B cell (primary cell): ENCODE measurements at regions of chr10 and their contacts with region 1.

Region 1: GRCh38 chr10:75019370-75019769 is 92.1 kb upstream of the SAMD8 start:
- DNase-seq: peak; percentile 55
- ATAC-seq: no peak
- H3K4me3 ChIP-seq: no peak overlapping the region
- H3K4me3 Mint-ChIP-seq: no peak overlapping the region
- H3K27ac ChIP-seq: no peak overlapping the region
- H3K27ac Mint-ChIP-seq: no peak overlapping the region
- H3K4me1 ChIP-seq: peaks cover 7 to 8% of the 10 kb centered on the region in 2 donors
- H3K4me1 Mint-ChIP-seq: peaks cover 22% of the 10 kb centered on the region
- H3K27me3 ChIP-seq: no peaks in the 10 kb centered on the region
- H3K27me3 Mint-ChIP-seq: no peaks in the 10 kb centered on the region
- CTCF ChIP-seq: peak; percentile 53

Region 2: DNA sequence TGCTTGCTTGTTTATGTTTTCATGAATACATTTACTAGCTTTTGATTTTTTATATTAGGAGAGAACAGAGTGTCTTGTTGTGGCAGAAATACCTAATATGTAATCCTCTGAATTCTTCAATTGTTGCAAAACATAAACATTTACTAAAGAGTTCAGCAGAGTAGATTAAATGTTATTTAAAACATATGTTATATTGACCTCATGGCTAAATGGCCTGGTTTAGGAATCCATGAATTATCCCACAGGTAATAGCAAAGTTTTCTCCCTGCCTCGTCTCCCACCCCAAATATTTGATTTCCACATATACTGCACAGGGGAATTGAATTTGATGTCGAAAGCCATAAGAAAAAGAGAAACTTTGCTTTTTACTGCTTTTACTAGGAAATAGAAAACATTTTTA is 756.5 kb before region 1 on chr10:
- CTCF ChIA-PET with region 1: interaction called, 13 read pairs
- POLR2A ChIA-PET with region 1: interaction called, 3 read pairs
- intact Hi-C with region 1: loop called (anchors 1 kb)
- DNase-seq: no peak
- ATAC-seq: no peak
- H3K4me3 ChIP-seq: no peak overlapping the region
- H3K4me3 Mint-ChIP-seq: no peak overlapping the region
- H3K27ac ChIP-seq: no peak overlapping the region
- H3K27ac Mint-ChIP-seq: peak overlapping the region; percentile 4
- H3K4me1 ChIP-seq: peaks cover 0 to 9% of the 10 kb centered on the region in 2 donors
- H3K4me1 Mint-ChIP-seq: peaks cover 20% of the 10 kb centered on the region
- H3K27me3 ChIP-seq: no peaks in the 10 kb centered on the region
- H3K27me3 Mint-ChIP-seq: no peaks in the 10 kb centered on the region
- CTCF ChIP-seq: no peak

Region 3: DNA sequence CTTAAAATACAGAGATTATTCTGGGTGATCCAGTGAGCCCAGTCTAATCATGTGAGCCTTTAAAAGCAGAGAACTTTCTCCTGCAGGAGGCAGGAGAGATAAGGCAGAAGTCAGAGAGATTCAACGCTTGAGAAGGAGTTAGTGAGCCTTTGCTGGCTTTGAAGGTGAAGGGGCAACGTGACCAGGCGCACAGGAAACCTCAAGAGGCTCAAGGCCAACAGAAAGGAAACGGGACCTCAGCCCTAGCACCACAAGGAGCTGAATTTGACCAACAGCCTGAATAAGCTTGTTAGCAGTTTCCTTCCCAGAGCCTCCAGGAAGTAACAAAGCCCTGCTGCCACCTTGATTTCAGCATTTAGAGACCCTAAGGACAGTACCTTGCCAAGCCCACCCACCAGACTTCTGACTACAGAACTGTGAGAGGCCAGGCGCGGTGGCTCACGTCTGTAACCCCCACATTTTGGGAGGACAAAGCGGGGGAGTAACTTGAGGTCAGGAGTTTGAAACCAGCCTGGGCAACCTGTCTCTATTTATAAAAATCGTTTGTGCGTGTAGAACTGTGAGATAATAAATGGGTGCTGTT is 280.3 kb before region 1 on chr10:
- CTCF ChIA-PET with region 1: interaction called, 49 read pairs
- POLR2A ChIA-PET with region 1: no interaction called
- intact Hi-C with region 1: loop called (anchors 1 kb)
- DNase-seq: peak; percentile 64
- ATAC-seq: peak; percentile 69
- H3K4me3 ChIP-seq: peak overlapping the region in 3 of 5 experiments; percentile 10 to 33 (median 25)
- H3K4me3 Mint-ChIP-seq: peak overlapping the region; percentile 66
- H3K27ac ChIP-seq: peak overlapping the region; percentile 15 to 37
- H3K27ac Mint-ChIP-seq: peak overlapping the region; percentile 75
- H3K4me1 ChIP-seq: peaks cover 21 to 23% of the 10 kb centered on the region in 2 donors
- H3K4me1 Mint-ChIP-seq: peaks cover 25% of the 10 kb centered on the region
- H3K27me3 ChIP-seq: no peaks in the 10 kb centered on the region
- H3K27me3 Mint-ChIP-seq: no peaks in the 10 kb centered on the region
- CTCF ChIP-seq: peak; percentile 54

Region 4: GRCh38 chr10:74799721-74800221 is 219.6 kb before region 1 on chr10:
- CTCF ChIA-PET with region 1: no interaction called
- POLR2A ChIA-PET with region 1: no interaction called
- intact Hi-C with region 1: no loop called
- DNase-seq: no peak
- ATAC-seq: no peak
- H3K4me3 ChIP-seq: no peak overlapping the region
- H3K4me3 Mint-ChIP-seq: no peak overlapping the region
- H3K27ac ChIP-seq: no peak overlapping the region
- H3K27ac Mint-ChIP-seq: no peak overlapping the region
- H3K4me1 ChIP-seq: peaks cover 22 to 24% of the 10 kb centered on the region in 2 donors
- H3K4me1 Mint-ChIP-seq: peaks cover 22% of the 10 kb centered on the region
- H3K27me3 ChIP-seq: peaks cover 0 to 7% (median 4%) of the 10 kb centered on the region in 4 experiments
- H3K27me3 Mint-ChIP-seq: peaks cover 10% of the 10 kb centered on the region
- CTCF ChIP-seq: no peak

Region 5: DNA sequence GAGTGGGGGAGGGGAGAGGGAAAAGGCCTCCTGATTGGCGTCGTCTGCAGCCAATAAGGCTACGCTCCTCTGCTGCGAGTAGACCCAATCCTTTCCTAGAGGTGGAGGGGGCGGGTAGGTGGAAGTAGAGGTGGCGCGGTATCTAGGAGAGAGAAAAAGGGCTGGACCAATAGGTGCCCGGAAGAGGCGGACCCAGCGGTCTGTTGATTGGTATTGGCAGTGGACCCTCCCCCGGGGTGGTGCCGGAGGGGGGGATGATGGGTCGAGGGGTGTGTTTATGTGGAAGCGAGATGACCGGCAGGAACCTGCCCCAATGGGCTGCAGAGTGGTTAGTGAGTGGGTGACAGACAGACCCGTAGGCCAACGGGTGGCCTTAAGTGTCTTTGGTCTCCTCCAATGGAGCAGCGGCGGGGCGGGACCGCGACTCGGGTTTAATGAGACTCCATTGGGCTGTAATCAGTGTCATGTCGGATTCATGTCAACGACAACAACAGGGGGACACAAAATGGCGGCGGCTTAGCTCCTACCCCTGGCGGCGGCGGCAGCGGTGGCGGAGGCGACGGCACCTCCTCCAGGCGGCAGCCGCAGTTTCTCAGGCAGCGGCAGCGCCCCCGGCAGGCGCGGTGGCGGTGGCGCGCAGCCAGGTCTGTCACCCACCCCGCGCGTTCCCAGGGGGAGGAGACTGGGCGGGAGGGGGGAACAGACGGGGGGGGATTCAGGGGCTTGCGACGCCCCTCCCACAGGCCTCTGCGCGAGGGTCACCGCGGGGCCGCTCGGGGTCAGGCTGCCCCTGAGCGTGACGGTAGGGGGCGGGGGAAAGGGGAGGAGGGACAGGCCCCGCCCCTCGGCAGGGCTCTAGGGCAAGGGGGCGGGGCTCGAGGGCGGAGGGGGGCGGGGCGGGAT is 193.0 kb before region 1 on chr10 and contains the start of gene KAT6B:
- CTCF ChIA-PET with region 1: interaction called, 4 read pairs
- POLR2A ChIA-PET with region 1: interaction called, 4 read pairs
- intact Hi-C with region 1: loop called (anchors 10 kb)
- DNase-seq: peak; percentile 100
- ATAC-seq: peak; percentile 75
- H3K4me3 ChIP-seq: peak within 1 kb of the TSS; percentile 81 to 99 (median 90)
- H3K4me3 Mint-ChIP-seq: peak within 1 kb of the TSS; percentile 93
- H3K27ac ChIP-seq: peak within 1 kb of the TSS; percentile 91 to 99
- H3K27ac Mint-ChIP-seq: peak within 1 kb of the TSS; percentile 97
- H3K4me1 ChIP-seq: peaks cover 30 to 38% of the 10 kb centered on the region in 2 donors
- H3K4me1 Mint-ChIP-seq: peaks cover 42% of the 10 kb centered on the region
- H3K27me3 ChIP-seq: no peaks in the 10 kb centered on the region
- H3K27me3 Mint-ChIP-seq: no peaks in the 10 kb centered on the region
- CTCF ChIP-seq: peak; percentile 39
- total RNA-seq, gene KAT6B: 111 and 119 TPM in 2 replicates

Region 6: GRCh38 chr10:74936577-74937501 is 82.5 kb before region 1 on chr10:
- CTCF ChIA-PET with region 1: no interaction called
- POLR2A ChIA-PET with region 1: no interaction called
- intact Hi-C with region 1: no loop called
- DNase-seq: no peak
- ATAC-seq: no peak
- H3K4me3 ChIP-seq: no peak overlapping the region
- H3K4me3 Mint-ChIP-seq: no peak overlapping the region
- H3K27ac ChIP-seq: no peak overlapping the region
- H3K27ac Mint-ChIP-seq: no peak overlapping the region
- H3K4me1 ChIP-seq: no peaks in the 10 kb centered on the region
- H3K4me1 Mint-ChIP-seq: peaks cover 17% of the 10 kb centered on the region
- H3K27me3 ChIP-seq: no peaks in the 10 kb centered on the region
- H3K27me3 Mint-ChIP-seq: no peaks in the 10 kb centered on the region
- CTCF ChIP-seq: no peak

Region 7: GRCh38 chr10:74977913-74978847 is 41.2 kb before region 1 on chr10:
- CTCF ChIA-PET with region 1: interaction called, 4 read pairs
- POLR2A ChIA-PET with region 1: no interaction called
- intact Hi-C with region 1: loop called (anchors 5 kb)
- DNase-seq: peak; percentile 84
- ATAC-seq: peak; percentile 85
- H3K4me3 ChIP-seq: peak overlapping the region in 3 of 5 experiments; percentile 8 to 40 (median 11)
- H3K4me3 Mint-ChIP-seq: peak overlapping the region; percentile 78
- H3K27ac ChIP-seq: peak overlapping the region; percentile 37 to 66
- H3K27ac Mint-ChIP-seq: peak overlapping the region; percentile 81
- H3K4me1 ChIP-seq: peaks cover 35 to 39% of the 10 kb centered on the region in 2 donors
- H3K4me1 Mint-ChIP-seq: peaks cover 51% of the 10 kb centered on the region
- H3K27me3 ChIP-seq: no peaks in the 10 kb centered on the region
- H3K27me3 Mint-ChIP-seq: no peaks in the 10 kb centered on the region
- CTCF ChIP-seq: no peak

Region 8: DNA sequence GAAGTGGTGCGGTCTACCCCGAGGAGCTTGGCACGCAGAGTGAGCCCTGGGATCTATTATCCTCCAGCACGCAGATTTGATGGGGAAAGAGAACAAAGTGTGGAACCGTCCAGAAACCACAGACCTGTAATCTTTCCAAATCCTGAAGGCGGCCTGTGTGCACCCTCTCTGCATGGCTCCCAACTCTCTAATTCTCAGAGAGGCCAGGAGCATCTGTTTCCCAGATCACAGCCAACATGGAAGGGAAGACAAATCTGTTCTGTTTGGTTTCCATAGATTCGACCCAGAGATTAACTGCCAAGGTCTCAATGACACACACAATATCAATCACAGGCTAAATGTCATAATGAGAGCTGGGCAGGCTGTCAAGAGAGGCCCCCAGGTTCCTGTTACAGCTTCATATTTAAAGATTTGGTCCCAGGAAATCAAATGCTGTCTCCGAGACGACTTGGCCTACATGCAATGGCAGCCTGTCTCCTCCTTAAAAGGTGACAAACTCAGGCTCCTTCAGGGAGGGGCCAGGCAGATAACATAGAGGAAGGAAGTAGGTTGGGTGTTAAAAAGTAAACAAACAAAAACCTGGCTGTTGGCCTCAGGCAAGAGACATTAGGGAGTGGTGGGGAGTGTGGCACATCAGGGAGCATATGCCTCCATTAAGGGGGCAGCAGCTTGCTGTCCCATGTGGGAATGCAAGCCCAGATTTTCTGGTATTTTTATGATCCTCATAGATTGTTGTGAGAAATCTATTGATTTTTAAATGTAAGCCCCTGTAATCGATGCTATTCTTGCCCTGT is 43.3 kb after region 1 on chr10:
- CTCF ChIA-PET with region 1: no interaction called
- POLR2A ChIA-PET with region 1: no interaction called
- intact Hi-C with region 1: no loop called
- DNase-seq: no peak
- ATAC-seq: no peak
- H3K4me3 ChIP-seq: no peak overlapping the region
- H3K4me3 Mint-ChIP-seq: no peak overlapping the region
- H3K27ac ChIP-seq: no peak overlapping the region
- H3K27ac Mint-ChIP-seq: no peak overlapping the region
- H3K4me1 ChIP-seq: no peaks in the 10 kb centered on the region
- H3K4me1 Mint-ChIP-seq: no peaks in the 10 kb centered on the region
- H3K27me3 ChIP-seq: no peaks in the 10 kb centered on the region
- H3K27me3 Mint-ChIP-seq: no peaks in the 10 kb centered on the region
- CTCF ChIP-seq: no peak

Region 9: DNA sequence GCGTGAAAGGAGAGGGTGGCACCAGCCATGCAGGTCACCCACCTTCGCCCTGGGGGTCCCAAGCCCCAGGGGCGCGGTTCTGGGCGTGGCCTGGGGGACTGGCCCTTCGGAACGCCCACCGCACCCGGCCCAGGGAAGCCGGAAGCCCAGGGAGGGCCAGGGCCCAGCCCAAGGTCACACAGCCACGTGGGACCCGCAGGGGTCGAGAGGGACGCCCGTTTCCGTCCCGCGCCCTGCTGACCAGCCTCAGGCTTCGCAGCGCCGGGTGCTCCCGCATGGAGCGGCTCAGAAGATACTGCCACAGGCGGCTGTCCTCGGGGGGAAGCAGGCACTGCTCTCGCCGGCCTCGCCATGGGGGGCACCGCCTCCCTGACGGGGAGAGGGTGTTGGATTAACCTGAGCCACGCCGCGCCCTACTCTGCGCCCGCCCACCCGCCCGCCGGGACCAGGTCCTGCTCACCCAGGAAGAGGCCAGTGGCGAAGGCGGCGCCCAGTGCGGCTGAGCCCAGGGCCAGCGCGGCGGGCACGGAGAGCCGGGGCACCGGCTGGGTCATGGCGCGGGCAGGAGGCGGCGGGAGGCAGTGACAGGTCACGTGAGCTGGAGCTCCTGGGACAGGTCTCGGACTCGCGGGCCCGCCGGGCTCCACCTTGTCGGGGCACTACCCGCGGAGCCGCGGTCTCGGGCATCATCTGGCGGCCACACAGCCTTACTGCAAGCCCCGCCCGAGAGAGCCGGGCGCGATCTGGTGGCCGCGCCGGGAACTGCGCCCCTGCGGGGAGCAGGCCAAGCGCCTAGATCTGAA is 216.2 kb after region 1 on chr10 and contains the start of gene COMTD1:
- CTCF ChIA-PET with region 1: no interaction called
- POLR2A ChIA-PET with region 1: no interaction called
- intact Hi-C with region 1: loop called (anchors 10 kb)
- DNase-seq: peak; percentile 94
- ATAC-seq: peak; percentile 70
- H3K4me3 ChIP-seq: peak within 1 kb of the TSS; percentile 17 to 80 (median 71)
- H3K4me3 Mint-ChIP-seq: peak within 1 kb of the TSS; percentile 85
- H3K27ac ChIP-seq: peak within 1 kb of the TSS; percentile 2 to 57
- H3K27ac Mint-ChIP-seq: peak within 1 kb of the TSS; percentile 74
- H3K4me1 ChIP-seq: peaks cover 4 to 20% of the 10 kb centered on the region in 2 donors
- H3K4me1 Mint-ChIP-seq: peaks cover 18% of the 10 kb centered on the region
- H3K27me3 ChIP-seq: no peaks in the 10 kb centered on the region
- H3K27me3 Mint-ChIP-seq: no peaks in the 10 kb centered on the region
- CTCF ChIP-seq: peak; percentile 100
- total RNA-seq, gene COMTD1: 12.3 and 14.5 TPM in 2 replicates